GM13977 (cell line): ENCODE measurements at regions of chr4 and their contacts with region 1.

Region 1: GRCh38 chr4:122602277-122603142 is 18.4 kb downstream of the IL21 start:
- DNase-seq: peak; percentile 28
- CTCF ChIP-seq: peak; percentile 45

Region 2: DNA sequence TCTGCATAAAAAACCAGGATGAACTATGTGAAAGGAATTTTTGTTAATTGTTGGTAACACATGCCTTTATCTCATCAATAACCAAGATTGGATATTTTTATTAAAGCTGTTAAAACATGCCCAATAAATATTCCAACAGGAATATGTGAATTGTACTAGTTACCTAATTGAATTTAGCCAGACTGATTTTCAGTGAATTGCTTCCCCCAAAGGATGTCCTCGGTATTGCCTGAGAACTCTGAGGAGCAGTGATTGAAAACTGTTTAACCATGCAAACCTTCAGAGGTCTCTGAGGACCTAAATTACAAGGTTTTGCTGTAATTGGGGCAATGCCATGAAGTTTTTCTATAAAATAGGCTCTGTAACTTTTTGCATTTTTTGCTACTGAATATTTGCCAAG is 383.7 kb before region 1 on chr4:
- in situ Hi-C with region 1: no loop called
- DNase-seq: no peak
- CTCF ChIP-seq: peak; percentile 9

Region 3: GRCh38 chr4:122922877-122923511 is 320.5 kb after region 1 on chr4:
- in situ Hi-C with region 1: loop called (anchors 25 kb)
- DNase-seq: peak; percentile 86
- CTCF ChIP-seq: no peak